Sciatic nerve (tissue), 2 donors: ENCODE measurements at regions of chr12 and their contacts with region 1.

Region 1: DNA sequence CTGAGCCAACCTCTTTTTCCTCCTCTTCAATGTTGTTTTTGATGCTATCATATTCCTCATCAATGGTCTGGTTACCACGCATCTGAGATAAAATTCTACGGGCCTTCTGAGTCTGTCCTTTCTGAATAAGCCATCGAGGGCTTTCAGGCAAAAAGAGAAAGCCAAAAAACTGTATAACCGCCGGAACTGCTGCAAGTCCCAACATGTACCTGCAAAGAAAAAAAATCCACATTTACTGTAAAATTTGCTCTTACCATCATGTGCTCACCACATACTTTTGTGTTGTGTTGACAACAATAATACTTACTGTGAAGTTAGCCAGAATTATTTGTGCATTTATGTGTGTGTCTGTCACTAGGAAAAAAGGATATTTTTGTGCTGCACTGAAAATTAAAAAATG is 77.6 kb downstream of the SLC2A13 start:
- DNase-seq: no peak
- ATAC-seq: no peak

Region 2: GRCh38 chr12:40045656-40046055 is 17.4 kb after region 1 on chr12:
- intact Hi-C with region 1: no loop called
- DNase-seq: no peak
- ATAC-seq: no peak

Region 3: GRCh38 chr12:40099423-40099853 is 71.1 kb after region 1 on chr12:
- intact Hi-C with region 1: loop called (anchors 10 kb)
- DNase-seq: no peak
- ATAC-seq: no peak

Region 4: DNA sequence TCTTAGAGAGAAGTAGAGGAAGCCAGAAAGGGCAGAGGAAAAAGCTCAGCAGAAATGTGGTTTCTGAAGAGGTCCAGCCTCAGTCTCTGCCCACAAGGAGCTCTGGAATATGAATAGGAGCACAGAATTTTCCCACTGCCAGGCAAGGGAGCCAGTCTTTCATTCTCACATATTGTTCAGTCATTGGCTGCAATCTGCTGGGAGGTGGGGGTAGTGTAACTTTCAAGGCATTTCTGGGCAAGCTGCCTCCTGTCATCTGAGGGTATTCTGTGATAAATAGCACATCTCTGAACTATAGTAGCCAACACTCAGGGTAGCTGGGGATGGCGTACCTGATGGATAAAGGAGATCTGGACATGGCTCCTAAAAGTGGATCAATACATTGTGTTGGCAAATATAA is 323.7 kb after region 1 on chr12:
- intact Hi-C with region 1: no loop called
- DNase-seq: no peak
- ATAC-seq: no peak